Breast epithelium (tissue), 4 donors: ENCODE measurements at regions of chr16 and their contacts with region 1.

Region 1: GRCh38 chr16:85245307-85246172 is 133.3 kb upstream of the CIBAR2 start:
- DNase-seq: peak in 1 of 2 donors; percentile 27
- H3K4me3 ChIP-seq: no peak overlapping the region
- H3K27ac ChIP-seq: no peak overlapping the region
- H3K4me1 ChIP-seq: no peaks in the 10 kb centered on the region
- H3K27me3 ChIP-seq: no peaks in the 10 kb centered on the region
- CTCF ChIP-seq: peak; percentile 52 to 86 (median 81)
- POLR2A ChIP-seq: no peak

Region 2: GRCh38 chr16:84007965-84008364 is 1237.6 kb before region 1 on chr16:
- intact Hi-C with region 1: no loop called
- DNase-seq: no peak
- H3K4me3 ChIP-seq: no peak overlapping the region
- H3K27ac ChIP-seq: no peak overlapping the region
- H3K4me1 ChIP-seq: no peaks in the 10 kb centered on the region
- H3K27me3 ChIP-seq: peaks cover 0 to 5% of the 10 kb centered on the region in 2 donors
- CTCF ChIP-seq: no peak
- POLR2A ChIP-seq: no peak

Region 3: DNA sequence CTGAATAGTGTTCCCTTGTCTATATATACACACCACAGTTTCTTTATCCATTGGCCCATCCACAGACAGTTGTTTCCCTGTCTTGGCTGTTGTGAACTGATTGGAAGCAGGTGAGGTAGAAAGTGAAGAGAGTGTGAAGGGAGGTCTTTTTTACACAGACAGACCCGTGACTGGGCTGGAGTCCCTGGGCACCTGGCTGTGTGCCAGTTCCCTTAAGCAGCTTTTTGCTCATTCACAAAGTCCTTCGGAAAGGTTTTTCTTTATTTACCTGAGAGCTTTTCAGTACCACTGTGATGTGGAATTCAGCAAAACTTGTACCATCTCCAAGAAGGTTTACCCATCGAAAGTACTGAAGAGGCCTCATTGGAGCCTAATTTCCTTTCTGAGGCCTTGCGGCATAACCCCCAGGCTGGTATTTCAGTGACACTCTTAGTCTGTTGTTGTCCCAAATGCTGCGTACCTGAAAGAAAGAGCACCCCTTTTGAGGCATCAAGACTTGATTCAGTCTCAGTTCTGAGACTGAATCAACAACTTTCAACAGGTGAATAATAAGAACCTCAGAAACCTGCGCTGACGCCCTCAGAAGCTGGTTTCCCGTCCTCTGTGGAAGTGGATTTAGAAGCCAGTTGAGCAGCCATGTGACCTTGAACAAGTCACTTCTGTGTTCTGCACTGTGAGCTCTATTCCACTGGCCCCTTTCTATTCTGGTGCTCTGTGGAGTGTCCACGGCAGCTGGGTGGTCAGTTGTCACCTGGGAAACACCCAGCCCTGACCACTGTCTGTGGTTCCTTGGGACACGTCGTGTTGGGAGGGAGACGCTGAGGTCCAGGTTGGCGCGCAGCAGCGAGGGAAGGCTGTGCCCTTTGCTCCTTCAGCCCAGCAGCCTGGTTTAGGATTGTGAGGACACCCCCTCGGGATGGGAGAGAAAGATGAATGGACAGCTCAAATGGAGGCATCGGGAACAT is 479.6 kb before region 1 on chr16:
- intact Hi-C with region 1: no loop called
- DNase-seq: no peak
- H3K4me3 ChIP-seq: no peak overlapping the region
- H3K27ac ChIP-seq: no peak overlapping the region
- H3K4me1 ChIP-seq: no peaks in the 10 kb centered on the region
- H3K27me3 ChIP-seq: no peaks in the 10 kb centered on the region
- CTCF ChIP-seq: no peak
- POLR2A ChIP-seq: no peak

Region 4: GRCh38 chr16:85114909-85115567 is 130.5 kb before region 1 on chr16:
- intact Hi-C with region 1: loop called (anchors 10 kb)
- DNase-seq: peak; percentile 72 to 87
- H3K4me3 ChIP-seq: peak overlapping the region in 2 of 3 donors; percentile 12 to 32
- H3K27ac ChIP-seq: no peak overlapping the region
- H3K4me1 ChIP-seq: no peaks in the 10 kb centered on the region
- H3K27me3 ChIP-seq: no peaks in the 10 kb centered on the region
- CTCF ChIP-seq: peak; percentile 89 to 98 (median 97)
- POLR2A ChIP-seq: no peak

Region 5: DNA sequence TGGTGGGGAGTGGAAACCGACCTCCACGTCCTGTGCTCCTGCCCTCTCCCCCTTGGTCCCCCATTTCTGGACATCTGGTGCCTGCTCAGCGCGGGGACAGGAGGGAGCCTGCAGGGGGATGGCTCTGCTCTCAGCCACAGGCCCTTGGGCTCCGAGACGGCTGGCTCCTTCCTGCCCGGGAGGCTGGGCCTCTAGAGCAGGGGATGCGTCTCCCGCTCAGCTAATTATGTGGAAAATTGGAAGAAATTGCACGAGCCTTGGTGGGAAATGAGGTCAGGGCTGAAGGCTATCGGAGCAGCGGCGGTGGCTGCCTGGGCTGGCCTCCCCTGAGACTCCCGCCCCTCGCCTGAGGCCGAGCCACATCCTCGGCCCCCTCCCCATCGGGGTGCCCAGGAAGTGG is 21.3 kb after region 1 on chr16:
- intact Hi-C with region 1: loop called (anchors 1 kb)
- DNase-seq: no peak
- H3K4me3 ChIP-seq: no peak overlapping the region
- H3K27ac ChIP-seq: no peak overlapping the region
- H3K4me1 ChIP-seq: no peaks in the 10 kb centered on the region
- H3K27me3 ChIP-seq: no peaks in the 10 kb centered on the region
- CTCF ChIP-seq: no peak
- POLR2A ChIP-seq: no peak

Region 6: GRCh38 chr16:85528528-85529387 is 283.2 kb after region 1 on chr16:
- intact Hi-C with region 1: no loop called
- DNase-seq: no peak
- H3K4me3 ChIP-seq: no peak overlapping the region
- H3K27ac ChIP-seq: no peak overlapping the region
- H3K4me1 ChIP-seq: peaks cover 7 to 18% of the 10 kb centered on the region in 2 donors
- H3K27me3 ChIP-seq: no peaks in the 10 kb centered on the region
- CTCF ChIP-seq: peak in 2 of 3 donors; percentile 22 to 32
- POLR2A ChIP-seq: no peak

Region 7: GRCh38 chr16:86199871-86200695 is 954.5 kb after region 1 on chr16:
- intact Hi-C with region 1: no loop called
- DNase-seq: no peak
- H3K4me3 ChIP-seq: no peak overlapping the region
- H3K27ac ChIP-seq: no peak overlapping the region
- H3K4me1 ChIP-seq: no peaks in the 10 kb centered on the region
- H3K27me3 ChIP-seq: peaks cover 0 to 81% of the 10 kb centered on the region in 2 donors
- CTCF ChIP-seq: no peak
- POLR2A ChIP-seq: no peak